ENCODE measurements at regions of chr2 and their contacts with region 1.

Region 1: GRCh38 chr2:218399391-218400166 is at the start of gene CTDSP1:
- DNase-seq: peak; percentile 97 to 100 (median 98)
- ATAC-seq: peak; percentile 63
- H3K4me3 ChIP-seq: peak within 1 kb of the TSS; percentile 99
- H3K4me1 ChIP-seq: peaks cover 30% of the 10 kb centered on the region
- CTCF ChIP-seq: no peak
- total RNA-seq, gene CTDSP1: 142 to 221 (median 165) TPM

Region 2: GRCh38 chr2:218292048-218293014 is 107.2 kb before region 1 on chr2 and contains the start of gene TMBIM1:
- intact Hi-C with region 1: loop called in 1 of 2 experiments (anchors 5 kb)
- DNase-seq: peak; percentile 87 to 90 (median 89)
- ATAC-seq: peak; percentile 81
- H3K4me3 ChIP-seq: peak within 1 kb of the TSS; percentile 68
- H3K4me1 ChIP-seq: peaks cover 58% of the 10 kb centered on the region
- CTCF ChIP-seq: peak; percentile 88
- total RNA-seq, gene TMBIM1: 201 to 464 (median 319) TPM